ENCODE measurements at regions of chr7 and their contacts with region 1.

Region 1: DNA sequence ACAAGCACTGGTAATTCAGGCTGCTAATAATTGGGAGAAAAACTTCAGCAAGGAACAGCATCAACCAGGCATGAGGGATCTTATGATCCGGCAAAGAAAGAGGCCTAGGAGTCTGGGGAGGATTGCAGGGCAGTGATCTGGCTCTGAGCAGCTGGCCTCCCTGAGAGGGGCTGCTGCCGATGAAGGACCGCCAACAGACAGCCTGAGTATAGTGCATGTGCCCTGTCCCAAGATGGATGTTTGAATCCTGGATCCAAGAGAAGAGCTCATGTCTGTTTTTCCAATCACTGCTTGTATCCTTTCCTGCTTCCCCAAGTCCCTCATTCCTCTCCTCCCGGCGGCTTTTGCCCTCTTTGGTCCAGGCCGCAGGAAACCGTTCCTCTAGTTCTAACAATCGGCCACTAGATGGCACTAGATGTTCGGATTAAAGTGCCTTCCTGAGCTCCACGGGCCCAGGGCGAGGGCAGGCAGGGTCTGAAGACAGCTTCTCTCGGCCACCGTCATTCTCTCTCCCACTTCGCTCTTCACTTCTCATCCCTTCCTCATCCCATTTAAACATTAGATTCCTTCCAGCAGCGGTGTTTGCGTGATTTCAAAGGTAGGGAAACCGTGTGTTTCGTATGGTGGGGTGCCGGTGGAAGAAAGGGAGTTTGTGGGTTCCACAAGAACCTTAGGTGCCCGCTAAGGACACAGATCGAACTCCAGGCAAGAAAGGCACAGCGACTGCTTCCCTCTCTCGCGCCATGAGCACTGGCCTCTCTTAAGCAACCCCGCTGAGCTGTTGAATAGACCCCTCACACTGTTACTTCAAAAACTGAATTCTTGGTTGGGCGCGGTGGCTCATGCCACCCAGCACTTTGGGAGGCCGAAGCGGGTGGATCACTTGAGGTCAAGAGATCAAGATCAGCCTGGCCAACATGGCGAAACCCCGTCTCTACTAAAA is 82.4 kb downstream of the ADCYAP1R1 start:
- DNase-seq: peak in 2 of 3 donors; percentile 54 to 77
- ATAC-seq: peak; percentile 86
- H3K4me3 ChIP-seq: no peak overlapping the region
- H3K4me1 ChIP-seq: no peaks in the 10 kb centered on the region
- CTCF ChIP-seq: peak; percentile 48

Region 2: DNA sequence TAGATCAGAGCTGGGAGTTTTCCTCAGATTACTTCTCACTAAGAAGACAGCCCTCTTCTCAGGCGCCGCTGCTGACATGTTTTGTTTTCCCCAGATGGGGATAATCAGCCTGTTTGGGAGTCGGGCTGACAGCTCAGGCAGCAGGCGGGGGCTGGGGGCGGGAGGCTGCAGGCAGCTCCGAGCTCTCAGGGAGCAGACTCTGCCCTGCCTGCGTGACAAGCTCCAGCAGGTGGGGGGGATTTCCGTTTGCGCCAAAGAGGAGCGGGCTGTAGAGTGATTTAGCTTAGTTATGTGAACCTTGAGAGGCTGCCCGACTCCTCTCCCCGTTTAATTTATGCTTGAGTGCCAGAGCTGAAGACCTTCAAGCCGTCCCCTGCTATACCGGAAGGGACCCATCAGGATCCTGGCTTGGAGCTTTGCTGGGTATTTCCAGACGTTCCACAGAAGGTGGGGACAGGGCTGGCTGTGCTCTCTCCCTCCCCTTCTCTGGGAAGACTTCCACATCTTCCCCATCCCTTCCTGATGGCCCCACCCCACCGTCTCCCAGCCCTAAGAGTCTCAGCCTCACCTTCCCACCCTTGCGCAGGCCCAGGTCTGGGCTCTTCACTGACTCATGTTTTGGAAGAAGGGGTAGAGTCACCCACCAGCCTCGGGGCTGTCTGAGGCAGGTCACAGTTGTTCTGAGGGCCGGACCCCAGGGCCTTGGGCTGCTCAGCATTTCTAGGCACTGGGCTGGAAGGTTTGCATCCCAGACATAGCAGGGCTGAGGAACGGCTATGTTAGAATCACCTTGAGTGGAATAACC is 107.2 kb before region 1 on chr7:
- intact Hi-C with region 1: no loop called
- DNase-seq: peak in 2 of 3 donors; percentile 14 to 34
- ATAC-seq: peak; percentile 25
- H3K4me3 ChIP-seq: no peak overlapping the region
- H3K4me1 ChIP-seq: no peaks in the 10 kb centered on the region
- CTCF ChIP-seq: no peak

Region 3: DNA sequence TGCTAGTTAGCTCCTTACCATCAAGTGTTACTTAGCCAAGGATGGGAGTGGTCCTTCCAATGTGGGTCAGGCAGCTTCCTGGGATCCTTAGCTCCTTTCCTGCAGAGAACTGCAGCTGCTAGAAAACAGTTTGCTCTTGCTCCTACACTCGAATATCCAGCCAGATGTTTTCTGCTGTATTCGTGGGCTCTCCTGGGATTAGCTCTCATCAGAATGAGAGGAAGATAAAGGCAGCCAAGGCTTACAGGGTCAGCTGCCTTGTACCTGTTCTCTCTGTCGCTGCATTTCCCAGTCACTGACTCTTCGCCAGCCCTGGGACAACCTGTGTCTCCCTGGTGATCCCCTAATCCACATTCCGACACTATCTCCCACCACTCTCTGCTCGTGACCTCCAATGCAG is 177.0 kb after region 1 on chr7:
- intact Hi-C with region 1: no loop called
- DNase-seq: no peak
- ATAC-seq: no peak
- H3K4me3 ChIP-seq: no peak overlapping the region
- H3K4me1 ChIP-seq: no peaks in the 10 kb centered on the region
- CTCF ChIP-seq: no peak

Region 4: DNA sequence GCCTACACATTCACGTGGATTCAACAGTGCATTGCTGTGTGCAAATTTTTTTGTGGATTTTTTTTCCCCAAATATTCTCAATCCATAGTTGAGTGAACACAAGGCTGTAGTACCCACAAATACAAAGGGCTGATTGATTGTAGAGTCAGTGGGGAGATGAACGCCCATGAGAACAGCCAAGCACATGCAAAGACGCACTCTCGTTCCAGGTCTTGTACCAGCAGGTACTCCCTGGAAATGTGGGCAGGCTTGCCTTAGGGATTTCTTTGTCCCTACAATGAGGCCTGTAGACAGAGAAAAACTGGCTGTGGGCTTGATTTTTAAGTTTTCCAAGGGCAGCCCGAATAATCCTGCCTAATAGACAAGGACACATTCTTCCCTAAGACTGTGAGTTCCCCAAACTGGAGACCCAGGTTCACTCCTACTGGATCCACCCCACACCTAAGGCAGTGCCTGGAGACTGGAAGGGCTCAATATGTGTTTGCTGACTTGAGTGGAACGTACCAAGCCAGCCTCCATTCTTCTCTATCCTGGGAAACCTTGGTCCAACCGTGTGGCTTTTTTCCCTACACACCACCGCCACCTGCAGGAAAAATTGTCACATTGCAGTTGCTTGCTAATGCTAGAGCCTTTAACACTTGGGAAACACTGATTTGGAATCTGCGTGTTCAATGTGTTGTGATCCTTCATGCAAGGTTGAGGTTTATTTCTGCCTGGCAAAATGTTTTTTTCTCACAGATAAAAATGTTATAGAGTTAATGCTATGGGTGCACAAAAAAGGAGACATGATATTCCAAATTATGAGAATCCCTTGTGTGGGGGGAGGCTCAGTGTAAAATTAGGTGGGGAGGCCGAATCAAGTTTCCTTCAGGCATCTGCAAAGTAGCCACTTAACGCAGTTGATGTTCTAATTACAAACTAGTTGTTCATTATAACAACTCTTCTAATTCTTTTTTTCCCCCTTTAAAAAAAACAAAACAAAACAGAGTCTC is 601.8 kb after region 1 on chr7:
- intact Hi-C with region 1: loop called in 1 of 2 experiments (anchors 10 kb)
- DNase-seq: peak in 2 of 3 donors; percentile 45 to 56
- ATAC-seq: peak; percentile 79
- H3K4me3 ChIP-seq: no peak overlapping the region
- H3K4me1 ChIP-seq: no peaks in the 10 kb centered on the region
- CTCF ChIP-seq: peak; percentile 66

Measured in mucosa of descending colon (tissue), 3 donors.